Testis (tissue), 5 donors: ENCODE measurements at regions of chr1 and their contacts with region 1.

Region 1: GRCh38 chr1:40849801-40850592 is 12.2 kb downstream of the CITED4 start:
- DNase-seq: peak; percentile 83
- H3K4me3 ChIP-seq: no peak overlapping the region
- H3K27ac ChIP-seq: no peak overlapping the region
- H3K4me1 ChIP-seq: peaks cover 3% of the 10 kb centered on the region
- H3K27me3 ChIP-seq: no peaks in the 10 kb centered on the region
- CTCF ChIP-seq: peak; percentile 70 to 94 (median 88)
- POLR2A ChIP-seq: no peak

Region 2: DNA sequence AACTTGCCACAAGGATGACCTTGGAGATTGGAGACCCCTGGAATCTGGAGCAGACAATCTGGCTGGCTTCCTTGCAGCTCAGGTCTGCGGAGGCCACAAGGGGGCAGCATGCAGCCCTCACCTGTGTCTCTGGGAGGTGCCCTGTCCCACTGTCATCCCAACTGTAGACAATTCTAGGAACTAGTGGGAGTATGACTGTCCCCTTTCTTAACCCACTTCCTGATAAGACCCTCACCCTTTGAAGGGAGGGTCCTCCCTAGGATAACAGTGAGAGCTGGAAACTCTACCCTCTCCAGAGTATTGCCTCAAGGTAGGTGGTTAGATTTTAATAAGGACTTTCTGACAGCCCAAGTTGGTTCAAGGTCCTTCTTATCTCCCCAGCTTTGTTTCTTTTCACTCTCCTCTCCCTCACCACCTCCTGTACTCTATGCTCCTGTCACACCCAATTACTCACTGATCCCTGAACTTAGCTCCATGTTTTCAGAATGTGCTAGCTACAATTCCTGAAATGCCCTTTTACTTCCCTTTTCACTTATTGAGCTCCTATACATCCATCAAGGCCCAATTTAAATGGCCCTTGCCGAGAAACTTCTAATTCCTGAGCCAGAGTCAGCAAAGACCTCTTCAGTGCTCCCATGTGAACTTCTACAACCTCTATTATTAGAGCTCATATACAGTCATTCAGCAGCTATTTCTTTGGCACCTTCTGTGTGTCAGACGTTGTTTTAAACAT is 75.6 kb before region 1 on chr1:
- intact Hi-C with region 1: loop called (anchors 10 kb)
- DNase-seq: peak; percentile 70
- H3K4me3 ChIP-seq: no peak overlapping the region
- H3K27ac ChIP-seq: no peak overlapping the region
- H3K4me1 ChIP-seq: no peaks in the 10 kb centered on the region
- H3K27me3 ChIP-seq: no peaks in the 10 kb centered on the region
- CTCF ChIP-seq: peak in 2 of 3 experiments; percentile 56 to 79
- POLR2A ChIP-seq: no peak